ENCODE measurements at regions of chr6 and their contacts with region 1.

Region 1: GRCh38 chr6:17584241-17584803 is 15.8 kb upstream of the FAM8A1 start:
- DNase-seq: no peak
- H3K4me3 ChIP-seq: peak overlapping the region in 2 of 4 donors; percentile 15 to 16
- H3K27ac ChIP-seq: peak overlapping the region in 3 of 4 donors; percentile 49 to 75 (median 69)
- H3K4me1 ChIP-seq: peaks cover 0 to 27% (median 0%) of the 10 kb centered on the region in 3 donors
- H3K27me3 ChIP-seq: peaks cover 0 to 6% (median 0%) of the 10 kb centered on the region in 4 donors
- CTCF ChIP-seq: peak; percentile 77 to 89 (median 84)
- POLR2A ChIP-seq: no peak

Region 2: DNA sequence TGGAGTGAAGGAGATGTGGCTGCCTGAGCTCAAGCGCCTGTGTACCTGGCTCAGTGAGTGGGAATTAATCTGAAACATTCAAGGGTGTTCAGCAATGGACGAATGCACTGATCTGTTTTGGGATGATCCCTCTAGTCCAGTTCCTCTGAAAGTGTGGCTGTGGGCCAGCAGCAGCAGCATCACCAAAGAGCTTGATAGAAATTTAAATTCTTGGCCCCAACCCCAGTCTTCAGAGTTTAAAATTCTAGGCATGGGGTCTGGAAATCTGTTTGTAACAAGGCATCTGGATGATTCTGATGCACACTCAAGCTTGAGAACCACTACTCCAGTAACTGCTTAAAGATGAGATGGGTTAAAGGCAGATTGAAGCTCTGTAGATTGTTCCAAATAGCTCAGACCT is 423.2 kb before region 1 on chr6:
- intact Hi-C with region 1: loop called (anchors 5 kb)
- DNase-seq: no peak
- H3K4me3 ChIP-seq: no peak overlapping the region
- H3K27ac ChIP-seq: no peak overlapping the region
- H3K4me1 ChIP-seq: no peaks in the 10 kb centered on the region
- H3K27me3 ChIP-seq: peaks cover 0 to 4% (median 0%) of the 10 kb centered on the region in 4 donors
- CTCF ChIP-seq: no peak
- POLR2A ChIP-seq: no peak

Region 3: DNA sequence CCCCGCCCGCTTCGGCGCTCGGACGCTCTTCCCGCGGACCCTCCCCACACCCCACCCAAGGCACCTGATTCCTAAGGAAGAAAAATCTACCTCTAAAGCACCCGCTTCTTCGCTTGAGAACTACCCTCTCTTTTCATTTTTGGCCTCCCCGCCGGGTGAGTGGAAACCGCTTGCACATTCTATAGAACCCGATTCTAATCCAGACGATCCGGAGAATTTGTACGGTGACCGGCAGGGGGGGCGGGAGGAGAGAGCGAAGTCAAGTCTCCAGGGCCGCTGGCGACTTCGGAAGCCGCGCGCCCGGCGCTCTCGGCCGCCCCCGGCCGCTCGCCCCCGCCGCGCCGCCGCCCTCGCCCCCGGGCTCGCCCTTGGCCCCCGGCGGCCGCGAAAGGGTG is 303.2 kb before region 1 on chr6 and contains the start of gene RBM24:
- intact Hi-C with region 1: loop called (anchors 10 kb)
- DNase-seq: no peak
- H3K4me3 ChIP-seq: peak within 1 kb of the TSS; percentile 43 to 73 (median 72)
- H3K27ac ChIP-seq: peak within 1 kb of the TSS; percentile 71 to 89 (median 87)
- H3K4me1 ChIP-seq: peaks cover 0 to 34% (median 3%) of the 10 kb centered on the region in 3 donors
- H3K27me3 ChIP-seq: peaks cover 0 to 59% (median 0%) of the 10 kb centered on the region in 4 donors
- CTCF ChIP-seq: peak in 4 of 6 experiments; percentile 19 to 40 (median 25)
- POLR2A ChIP-seq: no peak
- total RNA-seq, gene RBM24: 0.18 to 2.7 (median 0.61) TPM

Region 4: GRCh38 chr6:17439243-17439993 is 144.9 kb before region 1 on chr6:
- intact Hi-C with region 1: no loop called
- DNase-seq: no peak
- H3K4me3 ChIP-seq: no peak overlapping the region
- H3K27ac ChIP-seq: peak overlapping the region in 1 of 4 donors; percentile 3
- H3K4me1 ChIP-seq: no peaks in the 10 kb centered on the region
- H3K27me3 ChIP-seq: no peaks in the 10 kb centered on the region
- CTCF ChIP-seq: no peak
- POLR2A ChIP-seq: no peak

Region 5: DNA sequence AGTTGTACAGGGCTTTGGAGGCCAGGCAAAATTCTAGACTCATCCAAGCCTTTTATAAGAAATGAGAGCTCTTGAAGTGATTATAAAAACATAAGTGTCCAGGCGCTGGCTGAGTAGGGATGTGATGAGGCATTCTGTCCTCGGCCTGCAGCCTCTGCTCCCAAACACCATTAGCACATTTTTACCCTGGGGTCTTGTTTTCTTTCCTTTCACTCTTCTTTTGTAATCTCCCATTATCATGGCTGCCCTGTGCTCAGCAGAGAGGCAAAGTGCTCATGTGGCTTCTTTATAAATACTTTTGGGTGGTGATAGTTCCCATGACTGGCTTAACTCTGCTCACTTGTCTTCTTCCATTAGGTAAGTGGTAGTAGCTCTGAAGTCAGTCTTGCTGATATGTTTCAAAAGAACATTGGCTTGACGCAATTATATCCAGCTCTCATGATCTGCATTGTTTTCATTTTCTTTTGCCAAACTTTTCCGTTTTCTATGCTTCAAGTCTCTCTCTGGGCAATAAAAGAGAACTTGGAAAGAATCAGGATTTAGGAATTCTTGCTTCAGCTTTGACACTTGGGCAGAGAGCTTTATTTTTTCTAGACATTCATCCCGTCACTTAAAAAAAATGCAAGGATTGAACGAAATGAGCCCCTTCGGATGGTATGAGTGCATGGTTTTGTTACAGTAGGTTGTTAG is 129.9 kb before region 1 on chr6:
- intact Hi-C with region 1: no loop called
- DNase-seq: no peak
- H3K4me3 ChIP-seq: no peak overlapping the region
- H3K27ac ChIP-seq: no peak overlapping the region
- H3K4me1 ChIP-seq: no peaks in the 10 kb centered on the region
- H3K27me3 ChIP-seq: no peaks in the 10 kb centered on the region
- CTCF ChIP-seq: no peak
- POLR2A ChIP-seq: no peak

Region 6: DNA sequence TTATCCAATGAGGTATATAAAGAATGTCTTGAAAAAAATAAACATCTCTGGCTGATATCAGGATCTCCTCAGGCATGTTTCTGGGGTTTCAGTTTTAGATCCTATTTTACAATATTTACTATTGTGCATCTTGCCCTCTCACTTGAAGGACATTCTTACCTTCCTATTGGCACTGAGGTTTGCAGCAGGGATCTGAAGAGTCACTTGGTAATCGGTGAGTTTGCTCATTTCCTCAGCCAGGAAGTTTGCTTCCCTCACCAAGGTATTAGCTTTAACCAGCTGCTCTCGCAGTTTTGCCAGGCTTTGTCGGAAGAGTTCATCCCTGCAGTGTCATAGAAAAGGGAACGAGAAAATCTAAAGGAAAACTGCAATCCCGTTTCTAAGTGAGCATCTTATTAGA is 224.3 kb after region 1 on chr6:
- intact Hi-C with region 1: loop called (anchors 10 kb)
- DNase-seq: no peak
- H3K4me3 ChIP-seq: no peak overlapping the region
- H3K27ac ChIP-seq: no peak overlapping the region
- H3K4me1 ChIP-seq: no peaks in the 10 kb centered on the region
- H3K27me3 ChIP-seq: no peaks in the 10 kb centered on the region
- CTCF ChIP-seq: no peak
- POLR2A ChIP-seq: no peak